ENCODE measurements at regions of chr2 and their contacts with region 1.

Region 1: GRCh38 chr2:60550178-60550983 is 3.1 kb downstream of the BCL11A start:
- DNase-seq: peak in 1 of 2 donors; percentile 67
- ATAC-seq: peak; percentile 74 to 83 (median 80)
- H3K4me3 ChIP-seq: peak overlapping the region; percentile 85
- H3K27ac ChIP-seq: no peak overlapping the region
- H3K4me1 ChIP-seq: peaks cover 25% of the 10 kb centered on the region
- H3K27me3 ChIP-seq: peaks cover 3 to 88% (median 33%) of the 10 kb centered on the region in 3 donors
- CTCF ChIP-seq: peak; percentile 44

Region 2: DNA sequence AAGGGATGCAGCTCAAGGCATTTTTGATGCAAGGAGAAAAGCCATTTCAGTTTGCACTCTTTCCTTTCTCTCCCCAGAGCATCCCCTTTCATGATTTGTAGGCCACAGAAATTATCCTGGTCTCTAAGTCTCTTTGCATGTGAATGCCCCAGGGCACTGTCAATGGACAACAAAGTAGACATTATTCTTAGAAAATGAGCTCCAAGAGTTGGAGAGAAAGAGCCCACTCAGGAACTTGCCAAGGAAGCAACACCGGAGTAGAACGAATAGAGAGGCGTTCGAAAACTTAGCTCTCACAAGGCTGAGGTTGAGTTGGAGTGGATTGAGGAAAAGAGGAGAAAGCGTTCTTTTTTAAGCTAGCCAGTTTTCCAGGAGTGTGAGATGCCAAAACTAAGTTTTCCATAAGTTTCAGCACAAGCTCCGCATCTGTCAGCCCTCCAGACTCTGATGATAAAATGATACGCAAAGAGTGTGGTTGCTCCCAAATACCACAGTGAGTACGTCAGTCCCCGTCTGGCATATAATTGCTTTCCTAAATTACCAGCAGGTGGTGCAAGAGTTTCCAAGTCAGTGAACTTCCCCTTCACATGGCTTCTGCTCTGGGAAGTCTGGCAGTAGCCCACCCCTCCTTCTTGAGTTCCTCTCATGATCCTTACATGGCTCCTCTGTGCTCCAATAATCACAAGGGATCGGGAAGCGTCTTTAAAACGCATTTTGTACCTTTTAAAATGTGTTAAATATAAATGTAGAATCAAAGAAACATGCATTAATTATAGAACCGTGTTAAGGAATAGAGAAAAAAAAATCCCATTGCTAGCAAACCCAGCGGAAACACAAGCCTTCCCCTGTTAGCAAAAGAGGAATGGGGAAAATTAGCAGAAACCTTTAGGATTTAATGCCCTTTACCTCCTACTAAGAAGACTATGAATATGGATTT is 1248.6 kb before region 1 on chr2:
- intact Hi-C with region 1: loop called (anchors 5 to 10 kb)
- DNase-seq: no peak
- ATAC-seq: peak; percentile 57 to 82 (median 65)
- H3K4me3 ChIP-seq: no peak overlapping the region
- H3K27ac ChIP-seq: no peak overlapping the region
- H3K4me1 ChIP-seq: no peaks in the 10 kb centered on the region
- H3K27me3 ChIP-seq: no peaks in the 10 kb centered on the region
- CTCF ChIP-seq: peak; percentile 66

Region 3: DNA sequence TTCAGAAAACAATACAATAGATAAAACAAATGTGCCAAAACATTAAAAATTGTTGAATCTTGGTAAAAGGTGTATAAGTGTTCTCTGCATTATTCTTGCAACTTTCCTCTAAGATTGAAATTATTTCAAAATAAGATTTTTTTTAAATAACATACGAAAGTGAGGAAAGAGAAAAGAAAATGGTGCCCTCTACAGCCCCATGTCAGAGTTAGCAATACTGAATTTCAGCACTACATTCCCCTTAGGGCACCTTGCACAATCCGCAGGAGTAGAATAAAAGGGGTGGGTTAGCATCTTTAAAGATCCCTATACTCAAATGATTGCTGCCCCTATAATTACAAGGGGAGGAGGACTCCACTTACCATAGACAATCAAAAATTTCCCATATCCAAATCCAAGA is 430.6 kb before region 1 on chr2:
- intact Hi-C with region 1: loop called in 1 of 2 experiments (anchors 10 kb)
- DNase-seq: no peak
- ATAC-seq: no peak
- H3K4me3 ChIP-seq: no peak overlapping the region
- H3K27ac ChIP-seq: no peak overlapping the region
- H3K4me1 ChIP-seq: no peaks in the 10 kb centered on the region
- H3K27me3 ChIP-seq: no peaks in the 10 kb centered on the region
- CTCF ChIP-seq: peak; percentile 14

Region 4: DNA sequence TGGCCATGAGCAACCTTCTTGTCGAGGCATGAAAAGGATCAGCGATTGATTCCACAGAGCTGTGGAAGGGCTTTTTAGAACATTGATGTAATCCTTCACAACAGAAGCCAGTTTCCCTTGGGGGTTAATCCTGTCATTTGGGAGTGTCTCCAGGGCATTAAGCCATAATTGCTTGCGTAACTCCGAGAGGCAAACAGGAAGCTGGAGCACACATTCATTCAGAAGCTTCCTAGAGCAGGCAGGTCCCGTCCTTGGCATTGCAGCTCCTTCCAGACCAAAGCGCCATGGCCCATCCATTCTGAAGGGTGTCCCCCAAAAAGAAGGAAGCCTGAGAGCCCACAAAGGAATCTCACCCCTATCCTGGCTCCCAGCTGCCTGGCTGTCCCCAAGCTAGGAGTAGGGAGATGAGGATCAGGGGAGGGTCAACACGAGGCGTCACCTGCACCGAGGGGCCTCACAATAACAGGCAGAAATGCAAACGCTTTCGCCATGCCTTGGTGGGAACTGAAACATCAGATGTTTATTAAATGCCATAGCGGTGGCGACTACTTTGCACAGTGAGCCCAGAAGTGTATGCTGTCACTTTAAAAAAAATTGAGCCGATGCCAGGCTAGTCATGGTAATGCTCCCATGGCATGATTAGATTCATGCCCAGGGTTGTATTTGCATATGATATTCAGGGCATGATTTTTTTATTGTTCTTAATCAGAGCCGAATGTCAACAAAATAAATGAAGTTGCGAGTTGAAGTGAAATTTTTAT is 336.3 kb before region 1 on chr2:
- intact Hi-C with region 1: loop called in 1 of 2 experiments (anchors 5 kb)
- DNase-seq: peak in 1 of 2 donors; percentile 22
- ATAC-seq: peak in 3 of 4 donors; percentile 61 to 64 (median 62)
- H3K4me3 ChIP-seq: no peak overlapping the region
- H3K27ac ChIP-seq: no peak overlapping the region
- H3K4me1 ChIP-seq: peaks cover 4% of the 10 kb centered on the region
- H3K27me3 ChIP-seq: no peaks in the 10 kb centered on the region
- CTCF ChIP-seq: no peak

Region 5: GRCh38 chr2:60337140-60337494 is 213.3 kb before region 1 on chr2:
- intact Hi-C with region 1: loop called in 1 of 2 experiments (anchors 2 kb)
- DNase-seq: no peak
- ATAC-seq: no peak
- H3K4me3 ChIP-seq: no peak overlapping the region
- H3K27ac ChIP-seq: no peak overlapping the region
- H3K4me1 ChIP-seq: no peaks in the 10 kb centered on the region
- H3K27me3 ChIP-seq: no peaks in the 10 kb centered on the region
- CTCF ChIP-seq: no peak